ENCODE measurements at regions of chr11 and their contacts with region 1.

Region 1: GRCh38 chr11:46361283-46362155 is 14.3 kb downstream of the DGKZ start:
- DNase-seq: peak; percentile 88
- H3K4me3 ChIP-seq: peak overlapping the region; percentile 77
- H3K27ac ChIP-seq: peak overlapping the region; percentile 82
- H3K4me1 ChIP-seq: peaks cover 42% of the 10 kb centered on the region
- CTCF ChIP-seq: no peak

Region 2: DNA sequence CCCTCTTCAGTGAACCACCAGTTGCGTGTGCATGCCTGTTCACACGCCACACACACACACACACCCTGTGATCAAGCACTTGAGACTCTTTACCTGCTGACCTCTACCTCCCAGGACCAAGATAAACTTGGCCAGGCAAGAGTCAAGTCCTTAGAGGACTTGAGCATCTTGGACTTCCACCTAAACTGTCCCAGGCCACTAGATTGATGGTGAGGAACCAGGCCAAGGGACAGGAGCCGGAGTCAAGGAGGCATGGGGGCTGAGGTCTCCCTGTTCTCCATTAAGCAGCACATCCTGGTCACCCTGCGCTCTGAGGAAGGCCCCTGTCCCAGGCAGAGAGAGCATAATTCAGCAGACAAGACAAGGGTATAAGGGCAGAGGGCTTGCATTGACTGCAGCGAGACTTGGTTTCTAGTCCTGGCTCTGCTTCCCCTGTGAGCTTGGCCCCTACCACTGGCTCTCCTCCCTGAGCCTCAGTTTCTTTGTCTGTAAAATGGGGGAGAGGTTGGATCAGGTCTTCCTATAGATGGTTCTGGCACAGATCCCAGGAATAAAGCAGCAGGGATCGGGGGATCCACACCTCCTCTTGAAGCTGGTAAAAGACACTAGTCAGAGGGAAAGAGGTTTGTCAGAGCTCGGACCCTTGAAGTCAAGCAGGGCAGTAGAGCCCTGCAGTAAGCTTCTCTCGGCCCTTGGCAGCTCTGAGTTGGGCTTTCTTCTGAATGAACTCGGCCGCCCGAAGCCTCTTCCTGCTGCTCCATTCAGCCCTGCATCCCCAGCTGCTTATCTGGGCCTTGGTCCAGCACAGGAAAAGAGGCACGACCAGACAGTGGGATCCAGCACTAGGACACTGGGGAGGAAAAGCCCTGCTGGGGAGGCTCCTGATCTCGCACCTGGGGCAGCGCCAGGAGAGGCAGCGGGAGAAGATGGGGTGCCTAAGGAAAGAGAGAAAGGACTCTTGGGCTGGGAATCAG is 82.1 kb before region 1 on chr11:
- CTCF ChIA-PET with region 1: no interaction called
- POLR2A ChIA-PET with region 1: no interaction called
- intact Hi-C with region 1: no loop called
- DNase-seq: no peak
- H3K4me3 ChIP-seq: no peak overlapping the region
- H3K27ac ChIP-seq: no peak overlapping the region
- H3K4me1 ChIP-seq: no peaks in the 10 kb centered on the region
- CTCF ChIP-seq: no peak

Region 3: GRCh38 chr11:46346886-46347636 is 14.5 kb before region 1 on chr11 and contains the start of gene DGKZ:
- CTCF ChIA-PET with region 1: interaction called, 10 read pairs
- POLR2A ChIA-PET with region 1: interaction called, 38 read pairs
- intact Hi-C with region 1: loop called (anchors 1 kb)
- DNase-seq: peak; percentile 89
- H3K4me3 ChIP-seq: peak within 1 kb of the TSS; percentile 100
- H3K27ac ChIP-seq: peak within 1 kb of the TSS; percentile 49
- H3K4me1 ChIP-seq: peaks cover 55% of the 10 kb centered on the region
- CTCF ChIP-seq: peak; percentile 70
- total RNA-seq, gene DGKZ: 110 and 134 TPM in 2 replicates